ENCODE measurements at regions of chr19 and their contacts with region 1.

Region 1: DNA sequence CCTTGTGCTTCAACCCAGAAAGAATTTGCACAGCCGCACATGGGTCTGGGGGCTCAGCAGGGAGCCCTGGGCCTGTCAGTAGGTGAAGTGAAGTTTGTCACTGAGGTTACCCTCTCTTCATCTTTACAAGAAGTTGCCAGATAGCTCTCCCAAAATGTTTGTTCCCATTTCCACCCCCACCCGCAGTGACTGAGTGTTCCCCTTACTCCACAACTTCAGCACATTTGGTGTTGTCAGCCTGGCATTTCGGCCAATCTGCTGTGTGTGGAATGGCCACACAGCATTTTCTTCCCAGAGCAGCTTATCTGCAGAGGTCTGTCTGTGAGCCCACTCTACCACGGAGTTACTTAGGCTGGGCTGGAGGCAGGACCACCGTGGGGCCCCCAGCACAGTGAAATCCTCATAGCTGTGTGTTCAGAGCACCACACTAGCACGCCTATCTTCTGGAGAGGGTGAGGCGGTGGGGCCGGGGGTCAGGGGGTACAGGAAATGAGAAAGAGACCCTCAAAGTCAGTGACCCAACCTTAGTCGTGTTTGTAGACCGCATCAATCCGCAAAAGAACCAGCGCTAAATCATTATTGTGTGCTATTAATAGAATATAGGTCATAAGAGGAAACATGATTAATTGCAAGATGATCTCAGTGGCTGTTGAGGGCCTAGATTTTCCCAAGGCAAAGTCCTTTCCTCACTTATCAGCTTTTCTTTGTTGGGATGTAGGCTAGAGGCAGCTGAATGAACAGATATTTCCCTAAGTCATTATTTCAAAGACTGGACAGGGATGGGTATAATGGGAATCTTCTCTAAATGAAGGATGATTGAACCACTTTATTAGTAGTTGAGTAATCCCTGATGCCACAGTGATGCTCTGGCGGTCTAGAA is 116.0 kb downstream of the SIPA1L3 start:
- DNase-seq: no peak
- H3K4me3 ChIP-seq: no peak overlapping the region
- CTCF ChIP-seq: no peak

Region 2: DNA sequence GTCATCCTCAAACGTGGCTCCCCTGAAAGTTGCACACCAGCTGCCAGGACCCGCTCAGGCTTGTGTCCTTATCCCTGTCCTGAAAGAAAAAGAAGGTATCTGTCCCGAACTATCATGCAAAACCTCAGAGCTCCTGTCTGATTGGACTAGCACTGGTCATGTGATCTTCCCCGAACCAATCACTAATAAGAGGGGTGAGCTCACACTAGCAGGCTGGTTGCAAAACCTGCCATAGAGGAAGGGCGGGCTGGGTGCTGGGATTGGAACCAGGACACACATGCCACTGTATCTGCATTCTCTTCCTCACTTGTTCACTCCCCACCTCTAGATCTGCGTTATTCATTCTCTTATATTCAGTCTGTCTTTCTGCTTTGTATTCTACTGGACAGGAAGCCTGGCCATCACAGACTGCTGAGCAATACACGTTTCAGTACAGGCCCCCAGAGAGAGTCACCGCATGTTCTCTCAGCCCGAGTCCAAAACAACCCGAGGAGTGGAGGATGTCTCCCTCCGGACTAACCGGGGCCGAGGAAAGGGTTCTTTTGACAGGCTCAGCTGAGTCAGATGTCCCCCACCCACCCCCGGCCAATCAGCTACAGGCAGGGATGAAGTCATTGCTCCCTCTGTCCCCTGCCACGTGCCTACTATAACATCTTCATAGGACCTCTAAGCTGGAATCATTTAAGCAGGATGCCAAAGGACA is 18.4 kb before region 1 on chr19:
- CTCF ChIA-PET with region 1: interaction called, 16 read pairs
- POLR2A ChIA-PET with region 1: interaction called, 15 read pairs
- DNase-seq: peak; percentile 94
- H3K4me3 ChIP-seq: peak overlapping the region; percentile 57
- CTCF ChIP-seq: no peak

Region 3: GRCh38 chr19:38194056-38194701 is 171.1 kb after region 1 on chr19:
- CTCF ChIA-PET with region 1: no interaction called
- POLR2A ChIA-PET with region 1: no interaction called
- DNase-seq: no peak
- H3K4me3 ChIP-seq: no peak overlapping the region
- CTCF ChIP-seq: no peak